AG04450 (cell line): ENCODE measurements at regions of chr9 and their contacts with region 1.

Region 1: GRCh38 chr9:34899535-34900158 is 58.4 kb upstream of the PHF24 start:
- DNase-seq: peak; percentile 33
- H3K4me3 ChIP-seq: no peak overlapping the region
- H3K27ac ChIP-seq: no peak overlapping the region
- H3K27me3 ChIP-seq: peaks cover 17% of the 10 kb centered on the region
- CTCF ChIP-seq: peak; percentile 91

Region 2: GRCh38 chr9:34492051-34492450 is 407.6 kb before region 1 on chr9:
- CTCF ChIA-PET with region 1: no interaction called
- POLR2A ChIA-PET with region 1: no interaction called
- DNase-seq: no peak
- H3K4me3 ChIP-seq: no peak overlapping the region
- H3K27ac ChIP-seq: no peak overlapping the region
- H3K27me3 ChIP-seq: peaks cover 22% of the 10 kb centered on the region
- CTCF ChIP-seq: no peak

Region 3: DNA sequence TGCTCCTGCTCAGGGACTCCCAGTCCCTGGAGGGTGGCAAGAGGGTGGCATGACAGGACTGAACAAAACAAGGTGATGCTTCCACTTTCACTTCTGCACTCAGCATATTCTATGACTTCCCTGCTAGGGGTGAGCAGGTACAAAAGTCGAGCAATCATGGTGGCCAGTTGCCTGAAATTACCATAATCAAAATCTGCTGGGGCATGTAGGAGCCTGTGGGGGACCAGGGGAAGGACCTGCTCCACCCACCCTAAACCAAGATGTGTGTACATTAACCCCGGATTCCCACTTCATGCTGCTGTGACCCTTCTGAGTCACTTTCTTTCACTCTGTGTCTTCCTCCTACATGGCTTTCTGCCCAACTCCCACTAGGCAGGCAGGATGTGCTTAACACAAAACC is 14.9 kb before region 1 on chr9:
- CTCF ChIA-PET with region 1: interaction called, 13 read pairs
- POLR2A ChIA-PET with region 1: no interaction called
- DNase-seq: no peak
- H3K4me3 ChIP-seq: no peak overlapping the region
- H3K27ac ChIP-seq: no peak overlapping the region
- H3K27me3 ChIP-seq: no peaks in the 10 kb centered on the region
- CTCF ChIP-seq: no peak

Region 4: DNA sequence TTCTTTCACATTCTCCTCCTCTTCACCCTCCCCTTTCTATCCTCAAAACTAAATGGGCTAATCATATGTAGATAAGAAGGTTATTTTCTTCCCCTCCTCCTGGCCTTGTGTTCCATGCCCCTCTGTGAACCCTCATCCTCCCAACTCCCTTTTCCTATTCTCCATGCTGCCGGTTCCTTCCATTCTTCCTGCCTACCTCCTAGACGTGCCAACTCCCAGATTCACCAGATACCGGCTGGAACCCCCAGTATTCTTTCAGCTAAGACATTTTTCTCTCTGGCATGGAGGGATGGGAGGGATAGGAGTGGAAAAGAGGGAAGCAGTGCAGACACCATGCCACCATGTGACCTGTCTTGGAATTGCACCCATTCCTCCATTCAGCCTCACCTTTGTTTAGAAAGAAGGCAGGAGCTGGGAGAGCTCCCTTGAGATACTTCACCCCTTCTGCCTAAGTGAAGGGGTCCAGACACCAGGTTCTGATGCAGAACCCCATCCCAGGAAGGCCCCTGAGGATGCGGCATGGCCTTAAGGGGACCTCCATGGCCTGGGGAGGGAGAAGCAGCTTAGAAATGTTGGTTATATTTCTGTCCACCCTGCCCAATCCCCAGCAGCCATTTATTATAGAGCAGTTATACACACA is 94.7 kb after region 1 on chr9:
- CTCF ChIA-PET with region 1: interaction called, 33 read pairs
- POLR2A ChIA-PET with region 1: no interaction called
- DNase-seq: no peak
- H3K4me3 ChIP-seq: no peak overlapping the region
- H3K27ac ChIP-seq: peak overlapping the region; percentile 85
- H3K27me3 ChIP-seq: no peaks in the 10 kb centered on the region
- CTCF ChIP-seq: peak; percentile 71

Region 5: DNA sequence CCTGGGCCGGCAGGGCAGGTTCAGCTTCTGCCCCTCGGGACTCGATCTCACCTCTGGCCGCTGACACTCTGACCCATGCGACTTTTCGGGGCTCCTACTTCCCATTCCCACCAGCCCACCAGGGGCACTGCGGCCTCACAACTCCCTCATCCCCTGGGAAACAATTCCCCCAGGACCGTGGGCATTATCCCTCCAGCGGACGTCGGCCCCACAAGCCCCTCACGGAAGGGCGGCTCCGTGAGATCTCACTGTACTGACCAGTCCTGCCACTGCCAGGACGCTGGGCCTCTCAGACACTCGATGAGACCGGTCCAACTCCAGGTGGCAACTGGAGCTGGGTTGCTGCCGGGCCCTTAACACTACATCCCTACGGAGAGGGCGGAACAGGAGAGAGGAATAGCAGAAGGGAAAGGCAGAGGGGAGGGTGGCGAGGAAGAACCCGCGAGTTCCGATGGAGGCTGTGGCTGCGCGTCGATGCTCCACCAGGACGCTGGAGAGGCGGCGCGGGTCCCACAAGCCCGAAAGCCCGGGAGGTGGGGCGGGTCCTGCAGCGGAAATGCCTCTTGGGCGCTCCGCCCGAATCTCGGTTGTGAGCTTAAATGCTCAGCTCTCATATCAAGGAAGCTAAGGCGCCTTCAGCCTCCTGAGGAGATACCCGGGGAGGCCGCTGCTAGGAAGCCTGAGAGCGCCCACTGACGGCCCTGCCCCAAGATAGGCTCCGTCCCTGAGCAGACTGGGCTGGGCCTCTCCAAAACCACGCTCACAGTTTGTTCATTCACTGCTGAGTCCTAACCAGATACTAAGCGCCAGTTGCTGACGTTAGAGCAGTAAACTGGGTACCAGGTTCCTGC is 136.4 kb after region 1 on chr9:
- CTCF ChIA-PET with region 1: interaction called, 13 read pairs
- POLR2A ChIA-PET with region 1: no interaction called
- DNase-seq: no peak
- H3K4me3 ChIP-seq: peak overlapping the region; percentile 37
- H3K27ac ChIP-seq: no peak overlapping the region
- H3K27me3 ChIP-seq: no peaks in the 10 kb centered on the region
- CTCF ChIP-seq: no peak

Region 6: GRCh38 chr9:35051069-35051967 is 151.7 kb after region 1 on chr9:
- CTCF ChIA-PET with region 1: interaction called, 76 read pairs
- POLR2A ChIA-PET with region 1: interaction called, 5 read pairs
- DNase-seq: no peak
- H3K4me3 ChIP-seq: no peak overlapping the region
- H3K27ac ChIP-seq: peak overlapping the region; percentile 31
- H3K27me3 ChIP-seq: no peaks in the 10 kb centered on the region
- CTCF ChIP-seq: peak; percentile 75

Region 7: GRCh38 chr9:35096035-35096849 is 196.6 kb after region 1 on chr9 and contains the start of gene PIGO:
- CTCF ChIA-PET with region 1: interaction called, 115 read pairs
- POLR2A ChIA-PET with region 1: no interaction called
- DNase-seq: no peak
- H3K4me3 ChIP-seq: peak within 1 kb of the TSS; percentile 93
- H3K27ac ChIP-seq: peak within 1 kb of the TSS; percentile 76
- H3K27me3 ChIP-seq: no peaks in the 10 kb centered on the region
- CTCF ChIP-seq: peak; percentile 88
- polyA plus RNA-seq, gene PIGO: 14.1 and 14.3 TPM in 2 replicates

Region 8: DNA sequence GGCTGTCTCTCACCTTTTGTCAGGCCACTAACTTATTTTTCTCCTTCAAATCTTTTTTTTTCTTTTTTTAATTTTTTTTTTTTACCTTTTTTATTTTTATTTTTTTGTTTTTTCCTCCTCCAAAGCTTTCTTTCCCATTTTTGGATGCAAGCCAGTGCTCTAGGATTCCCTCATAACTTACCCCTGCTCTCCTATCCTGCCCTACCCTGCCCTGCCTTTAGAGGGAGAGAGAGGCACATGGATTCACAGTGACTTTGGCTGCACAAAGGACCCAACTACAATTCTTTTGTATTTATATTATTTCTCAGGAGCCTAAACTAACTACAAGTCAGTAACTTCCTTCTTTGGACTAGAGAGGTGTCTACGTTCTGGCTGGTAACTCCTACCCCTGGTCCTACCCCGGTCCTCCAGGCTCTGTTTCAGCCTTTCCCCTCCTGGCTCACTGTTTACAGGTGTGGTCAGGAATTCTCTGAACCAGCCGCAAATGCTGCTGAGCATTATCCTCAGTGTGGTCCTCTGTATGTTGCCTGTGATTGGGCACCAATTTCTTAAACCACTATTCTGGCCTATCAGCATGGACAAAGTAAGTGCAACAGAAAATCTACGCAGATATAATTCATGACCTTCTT is 581.8 kb after region 1 on chr9:
- CTCF ChIA-PET with region 1: interaction called, 25 read pairs
- POLR2A ChIA-PET with region 1: no interaction called
- DNase-seq: peak; percentile 52
- H3K4me3 ChIP-seq: no peak overlapping the region
- H3K27ac ChIP-seq: no peak overlapping the region
- H3K27me3 ChIP-seq: peaks cover 3% of the 10 kb centered on the region
- CTCF ChIP-seq: peak; percentile 80